ENCODE measurements at regions of chr11 and their contacts with region 1.

Region 1: DNA sequence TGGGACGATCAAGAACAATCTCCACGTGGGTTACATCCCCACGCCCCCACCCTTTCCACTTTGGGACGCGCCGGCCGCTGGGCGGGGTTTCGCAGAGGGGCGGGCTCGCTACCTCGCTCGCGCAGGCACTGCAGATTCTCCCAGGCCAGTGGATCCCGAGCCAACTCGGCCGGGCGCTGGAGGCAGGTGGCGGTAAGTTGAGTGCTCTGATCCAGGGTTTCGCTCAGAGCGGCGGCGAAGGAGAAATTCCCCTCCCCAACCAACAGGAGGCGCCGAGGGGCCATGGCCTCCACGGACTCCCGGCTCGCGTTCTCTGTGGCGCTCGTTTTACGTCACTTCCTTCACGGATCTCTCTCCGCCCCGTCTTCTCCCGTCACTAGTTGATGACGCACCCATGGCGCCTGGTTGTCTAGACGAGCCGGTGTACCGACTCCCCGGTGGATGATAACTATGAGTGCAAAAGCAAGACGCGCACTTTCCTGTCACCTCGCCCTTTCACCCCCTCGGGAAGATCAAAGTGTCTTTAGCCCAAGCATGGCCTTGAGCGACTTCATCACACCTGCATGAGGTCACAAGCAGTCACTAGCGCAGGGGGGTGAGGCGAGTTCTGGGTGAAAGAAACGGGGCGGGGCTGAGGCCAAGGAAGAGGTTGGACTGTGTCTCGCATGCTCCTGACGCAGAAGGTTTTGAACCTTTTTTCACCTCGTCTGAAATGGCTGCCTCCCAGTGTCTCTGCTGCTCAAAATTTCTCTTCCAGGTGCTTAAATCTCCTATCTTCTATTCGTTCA is at the starts of genes CFAP68 and FDXACB1:
- DNase-seq: peak; percentile 97
- ATAC-seq: peak; percentile 96 to 97
- total RNA-seq, gene CFAP68: 17.1 to 22.2 TPM
- total RNA-seq, gene FDXACB1: 1.0 to 1.2 TPM

Region 2: DNA sequence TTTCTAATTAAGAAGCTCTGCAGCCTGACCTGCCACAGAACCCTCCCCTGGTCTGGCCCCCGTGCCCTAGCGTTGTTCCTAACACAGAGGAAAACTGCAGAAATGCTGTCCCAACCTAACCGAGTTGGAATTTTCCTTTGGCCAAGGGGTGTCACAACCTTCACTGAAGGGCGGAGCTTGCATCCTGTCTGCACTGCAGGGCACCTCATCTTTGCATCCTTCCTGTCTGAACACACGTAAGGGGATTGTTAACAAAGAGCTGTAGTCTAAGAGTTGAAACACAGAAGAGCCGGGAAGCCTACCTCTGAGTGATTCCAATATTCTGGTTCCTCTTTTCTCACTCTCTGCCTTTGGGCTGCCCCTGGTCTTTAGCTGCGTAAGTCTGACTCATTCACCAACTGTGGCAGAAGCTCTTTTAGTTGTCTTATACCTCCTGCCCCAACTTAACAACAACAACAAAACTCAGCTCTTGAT is 59.7 kb after region 1 on chr11:
- intact Hi-C with region 1: loop called (anchors 5 to 10 kb)
- DNase-seq: no peak
- ATAC-seq: peak in 1 of 2 donors; percentile 20